Activated naive CD4-positive, alpha-beta T cell treated with anti-CD3 and anti-CD28 coated beads for 36 hours (primary cell): ENCODE measurements at regions of chr11 and their contacts with region 1.

Region 1: GRCh38 chr11:75547580-75548058 is 14.4 kb upstream of the SERPINH1 start:
- DNase-seq: peak; percentile 59
- H3K4me3 Mint-ChIP-seq: no peak overlapping the region
- H3K27ac Mint-ChIP-seq: no peak overlapping the region
- H3K4me1 Mint-ChIP-seq: peaks cover 8% of the 10 kb centered on the region
- H3K27me3 Mint-ChIP-seq: no peaks in the 10 kb centered on the region

Region 2: GRCh38 chr11:75087319-75088305 is 460.0 kb before region 1 on chr11:
- CTCF ChIA-PET with region 1: no interaction called
- intact Hi-C with region 1: no loop called
- DNase-seq: no peak
- H3K4me3 Mint-ChIP-seq: no peak overlapping the region
- H3K27ac Mint-ChIP-seq: no peak overlapping the region
- H3K4me1 Mint-ChIP-seq: no peaks in the 10 kb centered on the region
- H3K27me3 Mint-ChIP-seq: peaks cover 15% of the 10 kb centered on the region

Region 3: GRCh38 chr11:75577207-75577606 is 29.6 kb after region 1 on chr11:
- CTCF ChIA-PET with region 1: interaction called, 15 read pairs
- intact Hi-C with region 1: loop called (anchors 1 kb)
- DNase-seq: peak; percentile 72
- H3K4me3 Mint-ChIP-seq: no peak overlapping the region
- H3K27ac Mint-ChIP-seq: no peak overlapping the region
- H3K4me1 Mint-ChIP-seq: peaks cover 9% of the 10 kb centered on the region
- H3K27me3 Mint-ChIP-seq: peaks cover 2% of the 10 kb centered on the region

Region 4: GRCh38 chr11:75582895-75583717 is 35.5 kb after region 1 on chr11:
- CTCF ChIA-PET with region 1: interaction called, 15 read pairs
- intact Hi-C with region 1: loop called (anchors 1 kb)
- DNase-seq: peak; percentile 68
- H3K4me3 Mint-ChIP-seq: peak overlapping the region; percentile 72
- H3K27ac Mint-ChIP-seq: peak overlapping the region; percentile 64
- H3K4me1 Mint-ChIP-seq: peaks cover 13% of the 10 kb centered on the region
- H3K27me3 Mint-ChIP-seq: no peaks in the 10 kb centered on the region

Region 5: GRCh38 chr11:75592715-75593114 is 45.1 kb after region 1 on chr11:
- CTCF ChIA-PET with region 1: interaction called, 3 read pairs
- intact Hi-C with region 1: loop called (anchors 1 kb)
- DNase-seq: no peak
- H3K4me3 Mint-ChIP-seq: no peak overlapping the region
- H3K27ac Mint-ChIP-seq: no peak overlapping the region
- H3K4me1 Mint-ChIP-seq: peaks cover 2% of the 10 kb centered on the region
- H3K27me3 Mint-ChIP-seq: no peaks in the 10 kb centered on the region

Region 6: DNA sequence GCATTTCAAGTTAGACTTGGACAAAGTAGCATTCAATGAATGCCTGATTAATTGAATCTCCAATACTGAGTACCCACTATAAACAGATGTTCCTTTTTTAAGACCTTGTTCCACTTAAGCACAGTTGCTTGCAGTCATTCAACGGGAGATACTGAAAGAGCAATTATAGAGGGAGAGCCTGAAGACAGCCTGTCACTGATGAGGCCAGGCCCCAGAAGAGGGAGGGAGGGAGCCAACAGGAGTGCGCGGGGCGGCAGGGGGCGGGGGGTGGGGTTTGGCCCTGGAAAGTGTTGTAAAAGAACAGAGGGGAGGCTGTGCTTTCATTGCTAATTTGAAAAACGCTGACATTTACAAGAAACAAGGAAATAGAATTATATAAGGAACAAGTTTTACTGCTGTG is 68.1 kb after region 1 on chr11:
- CTCF ChIA-PET with region 1: no interaction called
- intact Hi-C with region 1: no loop called
- DNase-seq: no peak
- H3K4me3 Mint-ChIP-seq: no peak overlapping the region
- H3K27ac Mint-ChIP-seq: no peak overlapping the region
- H3K4me1 Mint-ChIP-seq: no peaks in the 10 kb centered on the region
- H3K27me3 Mint-ChIP-seq: peaks cover 2% of the 10 kb centered on the region

Region 7: DNA sequence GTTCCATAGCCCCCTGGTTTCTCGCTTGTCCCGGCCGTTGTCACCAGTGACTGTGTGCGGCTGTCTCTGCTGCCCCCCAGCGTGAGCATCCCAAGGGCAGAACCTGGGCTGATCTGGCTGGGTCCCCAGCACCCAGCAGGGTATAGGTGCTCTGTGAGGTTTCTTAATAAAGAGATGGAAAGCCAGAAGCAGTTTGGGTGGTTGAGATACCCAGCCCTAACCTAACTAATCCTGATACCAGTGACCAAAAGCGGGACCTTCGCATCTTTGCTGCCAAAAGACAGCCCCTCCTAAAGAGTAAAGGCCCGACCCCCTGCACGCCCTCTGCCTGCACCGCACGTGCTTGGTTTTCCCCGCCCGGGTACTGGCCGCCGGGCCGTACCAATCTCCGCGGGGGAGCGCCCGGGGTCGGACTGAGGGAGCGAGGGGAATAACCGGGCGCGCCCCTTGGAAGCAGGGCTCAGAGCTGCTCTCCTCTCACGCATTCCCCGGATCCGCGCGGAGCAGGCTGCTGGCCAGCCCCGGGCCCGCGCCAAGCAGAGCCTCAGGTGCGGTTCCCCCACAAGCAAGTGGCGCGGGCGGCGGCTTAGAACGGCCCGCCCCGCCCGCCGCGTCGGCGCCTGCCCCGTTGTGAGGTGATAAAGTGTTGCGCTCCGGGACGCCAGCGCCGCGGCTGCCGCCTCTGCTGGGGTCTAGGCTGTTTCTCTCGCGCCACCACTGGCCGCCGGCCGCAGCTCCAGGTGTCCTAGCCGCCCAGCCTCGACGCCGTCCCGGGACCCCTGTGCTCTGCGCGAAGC is 220.7 kb after region 1 on chr11 and contains the start of gene DGAT2:
- CTCF ChIA-PET with region 1: no interaction called
- intact Hi-C with region 1: loop called (anchors 2 kb)
- DNase-seq: peak; percentile 77
- H3K4me3 Mint-ChIP-seq: peak within 1 kb of the TSS; percentile 64
- H3K27ac Mint-ChIP-seq: no peak within 1 kb of the TSS
- H3K4me1 Mint-ChIP-seq: peaks cover 24% of the 10 kb centered on the region
- H3K27me3 Mint-ChIP-seq: peaks cover 4% of the 10 kb centered on the region
- total RNA-seq, gene DGAT2: 3.4 to 4.2 TPM